ENCODE measurements at regions of chr14 and their contacts with region 1.

Region 1: GRCh38 chr14:74362361-74362915 is 14.2 kb downstream of the VRTN start:
- DNase-seq: peak; percentile 80
- ATAC-seq: peak; percentile 79
- H3K4me3 Mint-ChIP-seq: no peak overlapping the region
- H3K27ac Mint-ChIP-seq: no peak overlapping the region
- H3K4me1 Mint-ChIP-seq: no peaks in the 10 kb centered on the region
- H3K27me3 Mint-ChIP-seq: peaks cover 9% of the 10 kb centered on the region

Region 2: GRCh38 chr14:74684434-74684833 is 322.0 kb after region 1 on chr14:
- CTCF ChIA-PET with region 1: no interaction called
- POLR2A ChIA-PET with region 1: no interaction called
- intact Hi-C with region 1: no loop called
- DNase-seq: peak; percentile 25
- ATAC-seq: peak; percentile 33
- H3K4me3 Mint-ChIP-seq: no peak overlapping the region
- H3K27ac Mint-ChIP-seq: no peak overlapping the region
- H3K4me1 Mint-ChIP-seq: peaks cover 19% of the 10 kb centered on the region
- H3K27me3 Mint-ChIP-seq: no peaks in the 10 kb centered on the region

Region 3: GRCh38 chr14:74804219-74804826 is 441.9 kb after region 1 on chr14:
- CTCF ChIA-PET with region 1: no interaction called
- POLR2A ChIA-PET with region 1: no interaction called
- intact Hi-C with region 1: loop called in 1 of 2 experiments (anchors 5 kb)
- DNase-seq: peak; percentile 43
- ATAC-seq: peak; percentile 44
- H3K4me3 Mint-ChIP-seq: no peak overlapping the region
- H3K27ac Mint-ChIP-seq: no peak overlapping the region
- H3K4me1 Mint-ChIP-seq: no peaks in the 10 kb centered on the region
- H3K27me3 Mint-ChIP-seq: no peaks in the 10 kb centered on the region